ENCODE measurements at regions of chr4 and their contacts with region 1.

Region 1: GRCh38 chr4:134154097-134154496 is 47.5 kb downstream of the PABPC4L start:
- DNase-seq: no peak
- ATAC-seq: no peak
- H3K4me3 ChIP-seq: no peak overlapping the region
- H3K4me3 Mint-ChIP-seq: no peak overlapping the region
- H3K27ac ChIP-seq: no peak overlapping the region
- H3K27ac Mint-ChIP-seq: no peak overlapping the region
- H3K4me1 ChIP-seq: no peaks in the 10 kb centered on the region
- H3K4me1 Mint-ChIP-seq: no peaks in the 10 kb centered on the region
- H3K27me3 ChIP-seq: no peaks in the 10 kb centered on the region
- H3K27me3 Mint-ChIP-seq: no peaks in the 10 kb centered on the region
- CTCF ChIP-seq: no peak

Region 2: GRCh38 chr4:134139188-134139587 is 14.9 kb before region 1 on chr4:
- CTCF ChIA-PET with region 1: no interaction called
- POLR2A ChIA-PET with region 1: no interaction called
- intact Hi-C with region 1: no loop called
- DNase-seq: no peak
- ATAC-seq: no peak
- H3K4me3 ChIP-seq: no peak overlapping the region
- H3K4me3 Mint-ChIP-seq: no peak overlapping the region
- H3K27ac ChIP-seq: no peak overlapping the region
- H3K27ac Mint-ChIP-seq: no peak overlapping the region
- H3K4me1 ChIP-seq: no peaks in the 10 kb centered on the region
- H3K4me1 Mint-ChIP-seq: no peaks in the 10 kb centered on the region
- H3K27me3 ChIP-seq: no peaks in the 10 kb centered on the region
- H3K27me3 Mint-ChIP-seq: no peaks in the 10 kb centered on the region
- CTCF ChIP-seq: no peak

Region 3: DNA sequence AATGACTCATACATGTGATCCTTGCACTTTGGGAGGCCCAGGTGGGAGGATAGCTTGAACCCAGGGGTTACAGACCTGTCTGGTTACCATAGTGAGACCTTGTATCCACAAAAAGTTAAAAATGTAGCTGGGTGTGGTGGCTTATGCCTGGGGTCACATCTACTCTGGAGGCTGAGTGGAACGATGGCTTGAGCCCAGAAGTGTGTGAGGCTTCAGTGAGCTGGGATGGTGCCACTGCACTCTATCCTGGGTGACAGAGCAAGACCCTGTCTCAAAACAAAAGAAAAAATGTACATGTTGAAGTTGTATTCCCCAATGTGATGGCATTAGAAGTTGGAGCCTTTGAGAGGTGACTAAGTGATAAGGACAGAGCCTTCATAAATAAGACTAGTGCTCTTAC is 456.9 kb after region 1 on chr4:
- CTCF ChIA-PET with region 1: no interaction called
- POLR2A ChIA-PET with region 1: no interaction called
- intact Hi-C with region 1: loop called in 1 of 2 experiments (anchors 5 kb)
- DNase-seq: no peak
- ATAC-seq: no peak
- H3K4me3 ChIP-seq: no peak overlapping the region
- H3K4me3 Mint-ChIP-seq: no peak overlapping the region
- H3K27ac ChIP-seq: no peak overlapping the region
- H3K27ac Mint-ChIP-seq: no peak overlapping the region
- H3K4me1 ChIP-seq: no peaks in the 10 kb centered on the region
- H3K4me1 Mint-ChIP-seq: no peaks in the 10 kb centered on the region
- H3K27me3 ChIP-seq: no peaks in the 10 kb centered on the region
- H3K27me3 Mint-ChIP-seq: no peaks in the 10 kb centered on the region
- CTCF ChIP-seq: no peak

Measured in CD4-positive, alpha-beta T cell (primary cell).